CD8-positive, alpha-beta T cell (primary cell): ENCODE measurements at regions of chr2 and their contacts with region 1.

Region 1: DNA sequence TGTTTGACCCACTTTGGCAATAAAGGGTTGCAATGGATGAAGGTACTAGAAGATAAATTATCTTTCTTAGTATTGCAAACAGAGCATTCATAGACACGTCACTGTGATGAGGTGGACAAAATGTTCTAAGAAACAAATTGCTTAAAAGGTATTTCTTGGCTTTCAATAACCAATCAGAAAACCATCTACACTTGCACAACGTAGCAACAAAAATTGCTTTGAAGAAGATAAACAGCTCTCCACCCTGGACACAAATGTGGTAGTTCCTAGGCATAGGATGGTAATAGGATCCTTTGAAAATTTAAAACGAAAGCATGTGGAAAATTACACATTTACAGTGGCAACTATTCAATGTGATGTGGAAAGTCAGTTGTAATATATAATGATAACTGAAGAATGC is 439.9 kb upstream of the ETAA1 start:
- DNase-seq: no peak
- ATAC-seq: no peak
- H3K4me3 ChIP-seq: no peak overlapping the region
- H3K4me3 Mint-ChIP-seq: no peak overlapping the region
- H3K27ac ChIP-seq: no peak overlapping the region
- H3K27ac Mint-ChIP-seq: no peak overlapping the region
- H3K4me1 ChIP-seq: no peaks in the 10 kb centered on the region
- H3K4me1 Mint-ChIP-seq: no peaks in the 10 kb centered on the region
- H3K27me3 ChIP-seq: no peaks in the 10 kb centered on the region
- H3K27me3 Mint-ChIP-seq: no peaks in the 10 kb centered on the region
- CTCF ChIP-seq: no peak

Region 2: GRCh38 chr2:66794070-66794469 is 163.1 kb before region 1 on chr2:
- CTCF ChIA-PET with region 1: no interaction called
- POLR2A ChIA-PET with region 1: no interaction called
- intact Hi-C with region 1: no loop called
- DNase-seq: no peak
- ATAC-seq: no peak
- H3K4me3 ChIP-seq: no peak overlapping the region
- H3K4me3 Mint-ChIP-seq: no peak overlapping the region
- H3K27ac ChIP-seq: no peak overlapping the region
- H3K27ac Mint-ChIP-seq: no peak overlapping the region
- H3K4me1 ChIP-seq: no peaks in the 10 kb centered on the region
- H3K4me1 Mint-ChIP-seq: no peaks in the 10 kb centered on the region
- H3K27me3 ChIP-seq: no peaks in the 10 kb centered on the region
- H3K27me3 Mint-ChIP-seq: no peaks in the 10 kb centered on the region
- CTCF ChIP-seq: no peak

Region 3: DNA sequence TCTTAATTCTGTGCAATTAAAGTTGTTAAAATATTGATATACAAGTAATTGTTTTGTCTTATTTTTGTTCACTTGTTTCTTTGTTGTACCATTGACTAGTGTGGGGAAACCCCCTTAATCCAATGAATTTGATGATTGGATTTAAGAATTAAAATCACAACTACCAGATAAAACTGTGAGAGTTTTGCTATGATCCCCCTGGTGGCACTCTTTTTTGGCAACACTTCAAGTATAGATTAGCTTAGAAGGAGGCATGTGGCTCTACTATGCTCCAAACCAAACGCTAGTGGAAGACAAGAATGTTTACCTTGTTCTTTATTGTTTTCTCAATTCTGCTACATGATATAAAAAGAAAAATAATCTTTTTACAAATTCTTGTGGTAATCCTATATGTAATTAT is 37.9 kb before region 1 on chr2:
- CTCF ChIA-PET with region 1: no interaction called
- POLR2A ChIA-PET with region 1: no interaction called
- intact Hi-C with region 1: loop called in 1 of 2 experiments (anchors 1 kb)
- DNase-seq: no peak
- ATAC-seq: no peak
- H3K4me3 ChIP-seq: no peak overlapping the region
- H3K4me3 Mint-ChIP-seq: no peak overlapping the region
- H3K27ac ChIP-seq: no peak overlapping the region
- H3K27ac Mint-ChIP-seq: no peak overlapping the region
- H3K4me1 ChIP-seq: no peaks in the 10 kb centered on the region
- H3K4me1 Mint-ChIP-seq: no peaks in the 10 kb centered on the region
- H3K27me3 ChIP-seq: no peaks in the 10 kb centered on the region
- H3K27me3 Mint-ChIP-seq: no peaks in the 10 kb centered on the region
- CTCF ChIP-seq: no peak

Region 4: GRCh38 chr2:67002618-67003371 is 45.6 kb after region 1 on chr2:
- CTCF ChIA-PET with region 1: no interaction called
- POLR2A ChIA-PET with region 1: no interaction called
- intact Hi-C with region 1: no loop called
- DNase-seq: no peak
- ATAC-seq: no peak
- H3K4me3 ChIP-seq: no peak overlapping the region
- H3K4me3 Mint-ChIP-seq: no peak overlapping the region
- H3K27ac ChIP-seq: no peak overlapping the region
- H3K27ac Mint-ChIP-seq: no peak overlapping the region
- H3K4me1 ChIP-seq: no peaks in the 10 kb centered on the region
- H3K4me1 Mint-ChIP-seq: no peaks in the 10 kb centered on the region
- H3K27me3 ChIP-seq: no peaks in the 10 kb centered on the region
- H3K27me3 Mint-ChIP-seq: no peaks in the 10 kb centered on the region
- CTCF ChIP-seq: no peak